ENCODE measurements at regions of chr20 and their contacts with region 1.

Region 1: DNA sequence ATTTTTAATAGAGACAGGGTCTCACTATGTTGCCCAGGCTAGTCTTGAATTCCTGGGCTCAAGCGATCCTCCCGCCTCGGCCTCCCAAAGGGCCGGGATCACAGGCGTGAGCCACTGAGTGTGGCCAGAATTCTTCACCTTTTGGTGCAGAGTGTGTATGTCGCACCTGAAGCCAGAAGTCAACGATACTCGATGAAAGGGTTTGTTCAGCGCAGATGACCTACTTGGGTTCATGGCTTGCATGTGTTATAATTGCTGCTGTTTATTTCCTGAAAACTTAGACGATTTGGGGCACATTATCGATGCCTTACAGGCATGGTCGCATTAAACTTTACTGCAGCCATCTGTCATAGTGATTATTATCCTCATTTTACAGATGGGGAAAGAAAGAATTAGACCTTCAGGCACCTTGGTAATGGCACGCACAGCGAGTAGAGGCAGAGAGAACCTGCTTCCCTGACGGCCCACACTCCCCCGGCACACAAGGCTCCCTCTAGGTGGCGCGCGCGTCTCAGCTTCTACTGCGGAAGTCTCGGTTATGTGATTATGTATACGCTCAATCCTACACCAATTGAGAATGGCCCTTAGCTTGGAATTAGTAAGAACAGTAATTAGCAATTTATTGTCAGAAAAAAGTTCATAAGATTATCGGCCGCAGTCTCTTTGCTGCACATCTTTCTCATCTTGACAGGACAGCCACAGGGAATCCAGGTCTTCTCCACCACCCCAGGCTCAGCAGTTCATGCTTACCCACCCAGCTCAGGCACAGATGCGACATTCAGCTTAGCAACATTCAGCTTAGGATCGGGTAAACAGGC is 212.8 kb upstream of the PROKR2 start:
- DNase-seq: peak; percentile 87
- ATAC-seq: peak; percentile 88
- H3K4me3 ChIP-seq: peak overlapping the region; percentile 57
- H3K27ac ChIP-seq: no peak overlapping the region
- H3K4me1 ChIP-seq: peaks cover 3% of the 10 kb centered on the region; the same call in 1 of the 2 replicates
- H3K27me3 ChIP-seq: 0 out of 2 replicates have a peak, but pooled peaks cover 3% of the 10 kb centered on the region
- CTCF ChIP-seq: peak; percentile 98

Region 2: DNA sequence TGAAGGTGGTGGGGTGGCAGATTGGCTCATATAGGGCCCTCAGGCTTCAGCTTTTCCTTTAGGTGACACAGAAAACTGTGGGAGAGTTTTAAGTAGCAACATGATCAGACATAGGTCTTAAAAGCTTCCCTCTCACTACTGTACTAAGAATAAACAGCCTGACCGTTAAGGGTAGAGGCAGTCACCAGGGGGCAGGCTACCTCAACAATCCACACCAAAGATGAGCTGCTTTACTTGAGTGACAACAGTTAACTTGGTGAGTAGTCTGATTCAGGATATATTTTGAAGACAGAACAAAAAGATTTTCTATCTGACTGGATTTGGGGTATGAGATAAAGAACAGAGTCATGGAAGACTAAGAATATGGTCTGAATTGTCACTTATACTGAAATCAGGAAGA is 27.6 kb after region 1 on chr20:
- CTCF ChIA-PET with region 1: interaction called, 8 read pairs
- POLR2A ChIA-PET with region 1: no interaction called
- intact Hi-C with region 1: loop called (anchors 1 kb)
- DNase-seq: peak; percentile 66
- ATAC-seq: peak; percentile 94
- H3K4me3 ChIP-seq: no peak overlapping the region
- H3K27ac ChIP-seq: no peak overlapping the region
- H3K4me1 ChIP-seq: no peaks in the 10 kb centered on the region
- H3K27me3 ChIP-seq: no peaks in the 10 kb centered on the region
- CTCF ChIP-seq: peak; percentile 88

Region 3: GRCh38 chr20:5933802-5934436 is 404.4 kb after region 1 on chr20:
- CTCF ChIA-PET with region 1: interaction called, 4 read pairs
- POLR2A ChIA-PET with region 1: no interaction called
- intact Hi-C with region 1: loop called (anchors 1 kb)
- DNase-seq: peak; percentile 62
- ATAC-seq: peak; percentile 86
- H3K4me3 ChIP-seq: no peak overlapping the region
- H3K27ac ChIP-seq: no peak overlapping the region
- H3K4me1 ChIP-seq: no peaks in the 10 kb centered on the region
- H3K27me3 ChIP-seq: 0 out of 2 replicates have a peak, but pooled peaks cover 4% of the 10 kb centered on the region
- CTCF ChIP-seq: peak; percentile 78

Region 4: GRCh38 chr20:6008254-6008653 is 478.7 kb after region 1 on chr20:
- CTCF ChIA-PET with region 1: interaction called, 4 read pairs
- POLR2A ChIA-PET with region 1: no interaction called
- intact Hi-C with region 1: loop called (anchors 1 kb)
- DNase-seq: peak; percentile 92
- ATAC-seq: peak; percentile 36
- H3K4me3 ChIP-seq: peak overlapping the region; percentile 96
- H3K27ac ChIP-seq: no peak overlapping the region; the same call in 1 of the 2 replicates
- H3K4me1 ChIP-seq: peaks cover 23% of the 10 kb centered on the region
- H3K27me3 ChIP-seq: no peaks in the 10 kb centered on the region
- CTCF ChIP-seq: no peak

Region 5: GRCh38 chr20:6074145-6074561 is 544.6 kb after region 1 on chr20:
- CTCF ChIA-PET with region 1: interaction called, 3 read pairs
- POLR2A ChIA-PET with region 1: no interaction called
- intact Hi-C with region 1: loop called (anchors 1 kb)
- DNase-seq: peak; percentile 26
- ATAC-seq: peak; percentile 82
- H3K4me3 ChIP-seq: no peak overlapping the region
- H3K27ac ChIP-seq: no peak overlapping the region
- H3K4me1 ChIP-seq: no peaks in the 10 kb centered on the region
- H3K27me3 ChIP-seq: no peaks in the 10 kb centered on the region
- CTCF ChIP-seq: peak; percentile 53; the same call in 1 of the 2 replicates